Tibial artery (tissue), 4 donors: ENCODE measurements at regions of chr10 and their contacts with region 1.

Region 1: GRCh38 chr10:27959093-27959715 is 39.7 kb downstream of the ODAD2 start:
- DNase-seq: no peak
- H3K4me3 ChIP-seq: no peak overlapping the region
- H3K27ac ChIP-seq: no peak overlapping the region
- H3K4me1 ChIP-seq: peaks cover 0 to 4% (median 0%) of the 10 kb centered on the region in 4 donors
- H3K27me3 ChIP-seq: no peaks in the 10 kb centered on the region
- CTCF ChIP-seq: no peak

Region 2: DNA sequence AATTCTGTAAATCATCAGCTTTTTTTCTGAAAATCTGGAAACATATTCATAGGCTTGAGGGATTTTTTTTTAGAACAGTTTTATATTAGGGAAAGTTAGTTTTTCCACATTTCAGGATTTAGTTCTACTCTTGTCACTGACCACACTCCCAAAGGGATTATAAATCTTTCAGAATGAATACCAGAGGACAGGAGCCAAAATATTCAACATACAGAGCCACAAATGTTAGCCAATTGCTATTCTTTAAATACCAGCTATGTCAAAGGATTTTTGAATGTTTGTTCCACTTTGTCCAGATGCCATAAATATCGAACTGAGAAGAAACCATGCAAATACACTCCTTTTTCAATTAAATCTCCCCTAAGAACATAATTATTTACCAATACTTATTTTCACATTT is 11.0 kb before region 1 on chr10:
- intact Hi-C with region 1: loop called (anchors 2 kb)
- DNase-seq: no peak
- H3K4me3 ChIP-seq: no peak overlapping the region
- H3K27ac ChIP-seq: no peak overlapping the region
- H3K4me1 ChIP-seq: peaks cover 0 to 31% (median 14%) of the 10 kb centered on the region in 4 donors
- H3K27me3 ChIP-seq: no peaks in the 10 kb centered on the region
- CTCF ChIP-seq: no peak